ENCODE measurements at regions of chr9 and their contacts with region 1.

Region 1: GRCh38 chr9:123081824-123082223 is 48.4 kb downstream of the GPR21 start:
- DNase-seq: no peak
- CTCF ChIP-seq: peak; percentile 41

Region 2: DNA sequence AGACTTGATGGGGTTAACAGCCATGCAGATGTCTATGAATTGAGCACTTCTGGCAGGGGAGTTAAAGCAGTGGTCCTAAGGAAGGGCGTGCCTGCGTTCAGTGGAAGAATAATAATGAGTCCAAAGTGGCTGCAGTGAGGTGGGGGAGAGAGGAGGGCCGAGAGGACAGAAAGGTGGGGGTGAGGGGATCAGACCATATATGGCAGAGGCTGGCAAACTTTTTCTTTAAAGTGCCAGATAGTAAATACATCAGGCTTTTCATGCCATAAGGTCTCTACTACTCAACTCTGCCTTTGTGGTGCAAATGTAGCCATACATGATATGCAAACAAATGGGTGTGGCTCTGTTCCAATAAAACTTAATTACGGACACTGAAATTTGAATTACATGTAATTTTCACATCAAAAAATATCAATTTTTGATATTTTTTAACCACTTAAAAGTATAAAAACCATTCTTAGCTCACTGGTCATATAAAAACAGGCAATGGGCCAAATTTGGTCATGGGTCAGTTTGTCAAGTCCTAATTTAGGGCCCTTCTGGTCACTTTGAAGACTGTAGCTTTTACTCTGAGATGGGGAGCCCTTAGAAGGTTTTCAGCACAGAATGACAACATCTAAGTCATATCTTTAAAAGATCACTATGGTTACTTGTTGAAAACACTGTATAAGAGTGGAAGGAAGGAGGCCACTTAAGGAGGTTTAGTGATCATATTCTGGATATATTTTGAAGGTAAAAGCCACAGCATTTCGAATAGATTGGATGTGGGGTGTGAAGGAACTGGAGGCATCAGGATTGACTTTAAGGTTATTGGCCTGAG is 109.6 kb after region 1 on chr9:
- in situ Hi-C with region 1: no loop called
- DNase-seq: no peak
- CTCF ChIP-seq: no peak

Region 3: GRCh38 chr9:123349691-123350480 is 268.1 kb after region 1 on chr9:
- in situ Hi-C with region 1: loop called (anchors 10 kb)
- DNase-seq: peak; percentile 86
- CTCF ChIP-seq: peak; percentile 68